ENCODE measurements at regions of chr4 and their contacts with region 1.

Region 1: DNA sequence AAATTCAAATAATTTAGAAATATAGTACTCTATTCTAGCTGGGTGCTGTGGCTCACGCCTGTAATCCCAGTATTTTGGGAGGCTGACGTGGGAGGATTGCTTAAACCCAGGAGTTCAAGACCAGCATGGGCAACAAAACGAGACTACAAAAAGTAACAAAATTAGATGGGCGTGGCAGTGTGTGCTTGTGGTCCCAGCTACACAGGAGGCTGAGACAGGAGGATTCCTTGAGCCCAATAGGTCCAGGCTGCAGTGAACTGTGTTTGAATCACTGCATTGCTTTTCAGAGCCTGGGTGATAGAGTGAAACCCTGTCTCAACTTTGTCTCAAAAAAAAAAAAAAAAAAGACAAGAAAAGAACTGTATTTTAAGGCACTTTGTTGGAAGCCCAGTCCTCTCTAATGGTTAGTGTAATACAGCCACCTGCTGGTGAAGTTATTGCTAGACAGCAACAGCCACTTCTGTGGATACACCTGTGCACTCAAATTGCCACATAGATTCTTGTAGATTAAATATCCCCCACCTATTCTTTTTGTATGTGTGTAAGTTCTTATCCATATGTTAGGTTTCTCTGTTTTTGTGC is 10.1 kb upstream of the FGG start:
- DNase-seq: no peak
- H3K4me3 ChIP-seq: no peak overlapping the region
- H3K27ac ChIP-seq: no peak overlapping the region
- H3K4me1 ChIP-seq: peaks cover 8 to 15% (median 9%) of the 10 kb centered on the region in 3 donors
- H3K27me3 ChIP-seq: peaks cover 0 to 12% (median 0%) of the 10 kb centered on the region in 4 donors
- CTCF ChIP-seq: peak in 5 of 6 experiments; percentile 43 to 63 (median 46)
- POLR2A ChIP-seq: no peak

Region 2: DNA sequence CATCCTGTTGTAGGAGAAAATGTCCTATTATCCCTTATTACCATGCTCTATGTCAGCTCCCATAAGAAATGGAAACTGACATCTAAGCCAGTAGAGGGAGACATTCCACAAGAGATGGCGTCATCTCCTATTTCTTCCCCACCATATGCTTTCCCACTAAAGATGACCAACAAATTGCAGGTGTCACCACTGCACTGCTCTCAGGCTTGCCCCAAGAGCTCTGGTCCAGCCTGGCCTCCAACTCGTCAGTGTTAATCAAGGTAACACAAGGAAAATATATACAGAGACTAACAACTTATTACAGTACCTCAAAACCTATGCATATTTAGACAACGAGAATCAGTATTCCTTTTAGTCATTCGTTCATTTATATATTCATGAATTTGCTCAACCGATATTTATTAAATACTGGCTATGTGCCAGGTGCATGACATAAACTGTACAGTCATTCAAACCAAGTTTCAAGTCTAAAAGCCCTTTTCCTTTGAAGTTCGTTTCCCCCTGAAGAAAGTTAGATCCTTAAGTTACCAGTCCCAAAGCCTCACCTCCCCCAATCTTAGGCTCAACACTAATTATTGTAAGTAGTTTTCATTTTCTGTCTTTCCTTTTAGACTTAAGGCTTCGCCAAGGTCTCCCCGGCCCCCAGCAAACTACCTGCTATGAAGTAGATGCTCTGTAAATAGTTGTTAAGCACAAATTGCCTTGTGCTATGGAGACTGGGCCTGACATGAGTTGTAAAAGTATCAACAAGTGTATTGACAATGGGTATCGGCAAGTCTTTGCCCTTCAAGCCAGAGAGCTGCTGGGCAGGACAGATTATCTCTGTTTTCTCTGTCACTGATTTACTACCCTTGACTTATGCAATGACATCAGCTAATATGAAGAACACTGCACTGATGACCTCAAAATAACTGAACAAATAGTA is 62.8 kb before region 1 on chr4:
- intact Hi-C with region 1: loop called (anchors 5 kb)
- DNase-seq: no peak
- H3K4me3 ChIP-seq: no peak overlapping the region
- H3K27ac ChIP-seq: no peak overlapping the region
- H3K4me1 ChIP-seq: no peaks in the 10 kb centered on the region
- H3K27me3 ChIP-seq: no peaks in the 10 kb centered on the region
- CTCF ChIP-seq: peak in 5 of 6 experiments; percentile 26 to 59 (median 47)
- POLR2A ChIP-seq: no peak

Region 3: DNA sequence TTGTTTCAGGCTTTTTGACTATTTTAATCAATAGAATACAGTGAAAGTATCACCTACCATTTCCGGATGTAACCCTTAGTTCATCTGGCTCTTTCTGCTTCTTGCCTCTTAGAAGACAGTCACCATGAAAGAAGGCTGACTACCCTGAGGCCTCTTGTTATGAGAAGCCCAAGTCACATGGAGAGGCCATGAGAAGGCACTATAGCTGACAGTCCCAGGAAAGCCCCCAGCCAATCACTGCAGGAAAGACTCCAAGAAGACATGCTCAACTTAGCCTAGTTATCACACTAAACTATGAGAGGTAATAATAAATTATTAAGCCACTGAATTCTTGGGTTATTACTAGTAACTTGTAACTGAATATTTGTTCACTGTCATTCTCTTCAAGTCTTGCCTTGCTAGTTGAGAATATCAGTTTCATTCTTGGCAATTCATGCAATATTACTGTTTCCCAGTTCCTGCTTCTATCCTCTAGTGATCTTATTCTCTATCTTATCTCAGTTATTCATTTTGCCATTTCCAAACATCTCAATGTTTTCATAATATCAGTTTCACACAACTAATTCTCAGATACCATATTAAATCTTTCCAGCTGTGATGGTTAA is 987.0 kb after region 1 on chr4:
- intact Hi-C with region 1: no loop called
- DNase-seq: no peak
- H3K4me3 ChIP-seq: no peak overlapping the region
- H3K27ac ChIP-seq: no peak overlapping the region
- H3K4me1 ChIP-seq: peaks cover 0 to 16% (median 0%) of the 10 kb centered on the region in 3 donors
- H3K27me3 ChIP-seq: no peaks in the 10 kb centered on the region
- CTCF ChIP-seq: no peak
- POLR2A ChIP-seq: no peak